B cell (primary cell): ENCODE measurements at regions of chr12 and their contacts with region 1.

Region 1: DNA sequence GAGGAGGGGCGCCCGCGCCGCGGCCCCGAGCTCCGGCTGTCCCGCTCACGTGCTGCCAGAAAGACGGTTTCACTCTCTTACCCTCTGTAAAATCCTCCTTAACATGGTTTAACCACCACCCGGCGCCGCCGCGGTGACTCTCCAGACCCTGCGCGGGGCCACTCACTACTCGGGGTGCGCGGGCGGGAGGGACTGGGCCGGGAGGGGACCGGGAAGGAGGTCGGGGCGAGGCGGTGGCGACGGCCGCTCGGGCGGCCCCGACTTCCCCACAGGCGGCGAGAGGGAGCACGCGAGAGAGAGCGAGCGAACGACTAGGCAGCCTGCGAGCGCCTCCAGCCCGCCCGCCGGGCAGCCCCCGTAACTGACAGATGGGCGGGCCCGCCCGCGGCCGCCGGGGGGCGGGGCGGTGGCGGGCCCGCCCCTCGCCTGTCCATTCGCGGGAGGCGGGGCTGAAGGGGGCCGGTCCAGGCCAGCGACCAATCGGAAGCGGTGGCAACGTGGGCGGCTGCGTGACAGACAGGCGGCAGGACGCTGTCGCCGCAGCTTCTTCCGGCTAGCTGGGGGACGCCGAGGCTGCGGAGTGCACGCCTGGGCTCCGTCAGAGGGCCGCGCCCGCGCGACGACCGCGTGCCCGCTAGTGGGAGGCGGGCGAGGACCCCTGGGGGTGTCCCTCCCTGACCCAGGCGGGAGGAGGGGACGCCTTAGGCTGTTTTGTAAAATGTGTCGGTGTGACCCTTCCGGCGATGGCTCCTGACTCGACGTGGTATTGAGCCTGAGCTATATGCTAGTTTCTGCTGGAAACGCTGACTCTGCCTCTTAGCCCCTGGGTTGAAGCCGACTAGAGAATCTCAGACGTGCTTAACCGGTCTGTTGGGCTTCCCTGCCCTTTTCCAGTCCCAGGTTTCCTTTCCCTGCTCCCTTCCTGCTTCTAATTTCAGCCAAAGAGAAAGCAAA is at the start of gene EEA1:
- DNase-seq: peak; percentile 97
- ATAC-seq: peak; percentile 82
- H3K4me3 ChIP-seq: peak within 1 kb of the TSS; percentile 64 to 91 (median 79)
- H3K4me3 Mint-ChIP-seq: peak within 1 kb of the TSS; percentile 96
- H3K27ac ChIP-seq: peak within 1 kb of the TSS; percentile 90 to 96
- H3K27ac Mint-ChIP-seq: peak within 1 kb of the TSS; percentile 96
- H3K4me1 ChIP-seq: peaks cover 23 to 24% of the 10 kb centered on the region in 2 donors
- H3K4me1 Mint-ChIP-seq: peaks cover 34% of the 10 kb centered on the region
- H3K27me3 ChIP-seq: no peaks in the 10 kb centered on the region
- H3K27me3 Mint-ChIP-seq: no peaks in the 10 kb centered on the region
- CTCF ChIP-seq: no peak
- total RNA-seq, gene EEA1: 24.4 and 26.3 TPM in 2 replicates

Region 2: DNA sequence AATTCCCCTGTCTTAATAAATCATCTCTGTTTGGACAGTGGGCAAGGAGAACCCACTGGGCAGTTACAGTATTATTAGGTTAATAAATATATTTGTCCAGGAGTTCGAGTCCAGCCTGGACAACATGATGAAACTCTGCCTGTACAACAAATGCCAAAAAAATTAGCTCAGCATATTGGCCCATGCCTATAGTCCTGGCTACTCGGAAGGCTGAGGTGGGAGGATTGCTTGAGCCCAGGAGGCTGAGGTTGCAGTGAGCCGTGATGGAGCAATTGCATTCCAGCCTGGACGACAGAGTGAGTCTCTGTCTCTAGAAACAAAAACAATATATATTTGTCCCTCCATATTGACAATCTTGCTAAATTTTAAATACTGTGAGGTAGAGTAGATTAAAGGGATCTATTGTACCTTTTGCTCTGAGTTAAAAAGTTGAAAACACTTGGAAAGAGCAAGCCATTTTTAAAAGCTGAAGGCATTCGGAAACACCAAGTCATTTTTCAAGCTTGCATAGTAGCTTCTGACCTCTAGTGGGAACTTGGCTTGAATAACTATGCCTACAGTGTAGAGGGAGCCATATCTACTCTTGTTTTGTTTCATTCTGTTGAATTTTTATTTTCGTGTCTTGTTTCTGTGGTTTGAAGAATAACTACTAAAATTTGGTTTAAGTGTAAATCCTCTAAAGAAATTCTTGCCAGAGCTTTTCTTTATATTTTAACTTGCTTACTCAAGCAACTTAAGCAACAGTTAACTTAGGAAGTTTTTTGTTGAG is 14.4 kb after region 1 on chr12:
- CTCF ChIA-PET with region 1: interaction called, 5 read pairs
- POLR2A ChIA-PET with region 1: interaction called, 3 read pairs
- intact Hi-C with region 1: loop called (anchors 1 kb)
- DNase-seq: no peak
- ATAC-seq: no peak
- H3K4me3 ChIP-seq: no peak overlapping the region
- H3K4me3 Mint-ChIP-seq: no peak overlapping the region
- H3K27ac ChIP-seq: peak overlapping the region in 1 of 2 donors; percentile 9
- H3K27ac Mint-ChIP-seq: peak overlapping the region; percentile 61
- H3K4me1 ChIP-seq: peaks cover 15 to 32% of the 10 kb centered on the region in 2 donors
- H3K4me1 Mint-ChIP-seq: peaks cover 31% of the 10 kb centered on the region
- H3K27me3 ChIP-seq: no peaks in the 10 kb centered on the region
- H3K27me3 Mint-ChIP-seq: no peaks in the 10 kb centered on the region
- CTCF ChIP-seq: no peak

Region 3: DNA sequence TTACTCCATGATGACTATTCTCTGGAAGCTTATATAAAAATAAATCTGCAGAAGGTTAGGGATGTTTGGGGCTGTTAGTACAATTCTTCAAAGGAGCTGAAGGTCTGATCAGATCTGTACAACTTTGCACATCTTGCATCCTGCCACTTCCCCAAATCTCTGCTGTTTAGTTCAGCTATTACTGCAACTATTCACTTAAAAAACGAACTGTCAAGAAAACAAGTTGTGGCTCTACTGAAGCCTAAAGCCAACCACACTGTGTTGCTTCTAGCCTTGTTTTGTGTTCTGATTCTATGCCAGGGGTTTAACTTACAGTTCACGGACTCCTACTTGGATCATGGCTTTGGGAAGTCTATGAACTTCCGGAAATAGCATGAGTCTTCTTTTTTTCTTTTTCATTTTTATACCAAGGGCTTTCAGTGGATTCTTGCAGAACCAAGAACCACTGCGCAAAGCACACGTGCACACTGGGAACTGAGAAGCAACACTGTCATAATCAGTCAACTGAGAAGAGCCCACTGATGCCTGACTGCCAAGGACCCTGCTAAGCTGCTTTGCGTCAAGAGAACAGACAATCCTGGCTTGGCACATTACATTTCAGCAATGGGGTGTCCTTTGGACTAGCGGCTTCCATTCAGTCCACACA is 66.1 kb after region 1 on chr12:
- CTCF ChIA-PET with region 1: interaction called, 4 read pairs
- POLR2A ChIA-PET with region 1: interaction called, 7 read pairs
- intact Hi-C with region 1: loop called (anchors 2 kb)
- DNase-seq: peak; percentile 79
- ATAC-seq: peak; percentile 94
- H3K4me3 ChIP-seq: peak overlapping the region in 1 of 5 experiments; percentile 6
- H3K4me3 Mint-ChIP-seq: peak overlapping the region; percentile 77
- H3K27ac ChIP-seq: peak overlapping the region; percentile 66 to 68
- H3K27ac Mint-ChIP-seq: peak overlapping the region; percentile 93
- H3K4me1 ChIP-seq: peaks cover 12 to 30% of the 10 kb centered on the region in 2 donors
- H3K4me1 Mint-ChIP-seq: peaks cover 27% of the 10 kb centered on the region
- H3K27me3 ChIP-seq: no peaks in the 10 kb centered on the region
- H3K27me3 Mint-ChIP-seq: no peaks in the 10 kb centered on the region
- CTCF ChIP-seq: no peak

Region 4: DNA sequence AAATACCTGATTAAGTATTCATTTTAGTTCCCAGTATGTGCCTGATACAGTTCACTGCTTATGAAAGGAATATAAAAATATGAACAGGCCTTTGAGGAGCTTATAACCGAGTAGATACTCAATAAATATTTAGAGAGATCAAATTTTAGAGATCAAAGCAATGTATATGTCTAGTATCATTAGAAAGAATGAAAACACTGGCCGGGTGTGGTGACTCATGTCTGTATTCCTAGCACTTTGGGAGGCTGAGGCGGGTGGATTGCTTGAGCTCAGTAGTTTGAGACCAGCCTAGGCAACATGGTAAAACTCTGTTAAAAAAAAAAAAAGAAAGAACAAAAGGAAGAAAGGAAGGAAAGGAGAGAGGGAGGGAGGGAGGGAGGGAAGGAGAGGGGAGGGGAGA is 113.0 kb after region 1 on chr12:
- CTCF ChIA-PET with region 1: no interaction called
- POLR2A ChIA-PET with region 1: no interaction called
- intact Hi-C with region 1: no loop called
- DNase-seq: no peak
- ATAC-seq: no peak
- H3K4me3 ChIP-seq: no peak overlapping the region
- H3K4me3 Mint-ChIP-seq: no peak overlapping the region
- H3K27ac ChIP-seq: no peak overlapping the region
- H3K27ac Mint-ChIP-seq: no peak overlapping the region
- H3K4me1 ChIP-seq: no peaks in the 10 kb centered on the region
- H3K4me1 Mint-ChIP-seq: no peaks in the 10 kb centered on the region
- H3K27me3 ChIP-seq: no peaks in the 10 kb centered on the region
- H3K27me3 Mint-ChIP-seq: no peaks in the 10 kb centered on the region
- CTCF ChIP-seq: no peak

Region 5: GRCh38 chr12:93183940-93184671 is 254.9 kb after region 1 on chr12:
- CTCF ChIA-PET with region 1: no interaction called
- POLR2A ChIA-PET with region 1: no interaction called
- intact Hi-C with region 1: no loop called
- DNase-seq: peak; percentile 74
- ATAC-seq: peak; percentile 85
- H3K4me3 ChIP-seq: peak overlapping the region in 1 of 5 experiments; percentile 18
- H3K4me3 Mint-ChIP-seq: peak overlapping the region; percentile 64
- H3K27ac ChIP-seq: peak overlapping the region; percentile 45 to 75
- H3K27ac Mint-ChIP-seq: peak overlapping the region; percentile 93
- H3K4me1 ChIP-seq: peaks cover 32 to 44% of the 10 kb centered on the region in 2 donors
- H3K4me1 Mint-ChIP-seq: peaks cover 51% of the 10 kb centered on the region
- H3K27me3 ChIP-seq: no peaks in the 10 kb centered on the region
- H3K27me3 Mint-ChIP-seq: no peaks in the 10 kb centered on the region
- CTCF ChIP-seq: no peak

Region 6: DNA sequence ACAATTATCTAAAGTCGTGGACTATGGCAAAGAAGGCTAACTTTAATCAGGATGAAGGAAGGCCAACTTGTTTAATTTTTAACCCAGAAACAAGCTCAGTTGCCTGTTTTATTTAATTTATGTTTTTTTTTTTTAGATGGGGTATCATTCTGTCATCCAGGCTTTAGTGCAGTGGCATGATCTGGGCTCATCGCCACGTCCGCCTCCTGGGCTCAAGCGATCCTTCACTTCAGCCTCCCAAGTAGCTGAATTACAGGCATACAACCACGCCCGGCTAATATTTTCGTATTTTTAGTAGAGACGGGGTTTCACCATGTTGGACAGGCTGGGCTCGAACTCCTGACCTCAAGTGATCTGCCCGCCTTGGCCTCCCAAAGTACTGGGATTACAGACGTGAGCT is 468.2 kb after region 1 on chr12:
- CTCF ChIA-PET with region 1: interaction called, 16 read pairs
- POLR2A ChIA-PET with region 1: no interaction called
- intact Hi-C with region 1: loop called (anchors 5 kb)
- DNase-seq: no peak
- ATAC-seq: no peak
- H3K4me3 ChIP-seq: no peak overlapping the region
- H3K4me3 Mint-ChIP-seq: no peak overlapping the region
- H3K27ac ChIP-seq: no peak overlapping the region
- H3K27ac Mint-ChIP-seq: no peak overlapping the region
- H3K4me1 ChIP-seq: no peaks in the 10 kb centered on the region
- H3K4me1 Mint-ChIP-seq: peaks cover 9% of the 10 kb centered on the region
- H3K27me3 ChIP-seq: no peaks in the 10 kb centered on the region
- H3K27me3 Mint-ChIP-seq: no peaks in the 10 kb centered on the region
- CTCF ChIP-seq: no peak

Region 7: DNA sequence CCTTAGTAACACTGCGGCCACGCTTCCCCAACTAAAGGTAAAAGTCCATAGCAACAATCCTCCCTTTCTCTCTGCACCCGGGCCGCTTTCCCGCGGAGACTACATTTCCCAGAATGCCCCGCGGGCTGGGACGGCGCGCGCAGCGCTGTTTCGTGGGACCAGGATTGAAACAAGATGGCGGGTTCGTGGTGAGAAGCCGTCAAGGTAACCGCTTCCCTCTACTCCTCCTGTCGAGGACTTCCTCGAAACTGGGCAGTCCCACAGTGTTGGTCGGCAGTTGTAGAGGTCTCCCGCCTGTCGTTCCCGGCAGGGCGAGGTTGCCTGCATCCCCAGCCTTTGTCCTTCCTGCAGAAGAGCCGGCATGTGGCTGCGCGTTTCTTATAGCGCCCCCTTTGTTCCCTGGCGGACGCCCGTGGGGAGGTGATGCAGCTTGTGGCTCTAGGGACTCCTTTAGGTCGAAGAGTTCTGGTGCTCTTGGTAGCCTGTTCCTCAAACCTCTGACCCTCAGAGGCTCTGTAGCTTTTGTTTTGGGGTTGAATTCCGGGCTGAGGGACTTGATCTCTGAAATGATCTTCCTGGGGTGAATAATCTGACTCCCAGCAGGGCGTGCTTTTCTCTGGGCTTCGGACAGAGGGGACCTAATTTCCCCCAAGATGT is 538.2 kb after region 1 on chr12 and contains the start of gene MRPL42:
- CTCF ChIA-PET with region 1: interaction called, 3 read pairs
- POLR2A ChIA-PET with region 1: interaction called, 3 read pairs
- intact Hi-C with region 1: loop called (anchors 1 kb)
- DNase-seq: peak; percentile 95
- ATAC-seq: peak; percentile 93
- H3K4me3 ChIP-seq: peak within 1 kb of the TSS; percentile 64 to 82 (median 78)
- H3K4me3 Mint-ChIP-seq: peak within 1 kb of the TSS; percentile 95
- H3K27ac ChIP-seq: peak within 1 kb of the TSS; percentile 60 to 80
- H3K27ac Mint-ChIP-seq: peak within 1 kb of the TSS; percentile 95
- H3K4me1 ChIP-seq: peaks cover 12 to 17% of the 10 kb centered on the region in 2 donors
- H3K4me1 Mint-ChIP-seq: peaks cover 28% of the 10 kb centered on the region
- H3K27me3 ChIP-seq: no peaks in the 10 kb centered on the region
- H3K27me3 Mint-ChIP-seq: no peaks in the 10 kb centered on the region
- CTCF ChIP-seq: peak; percentile 83
- total RNA-seq, gene MRPL42: 41.9 and 45.2 TPM in 2 replicates

Region 8: GRCh38 chr12:93677195-93678064 is 748.2 kb after region 1 on chr12 and contains the start of gene CRADD:
- CTCF ChIA-PET with region 1: no interaction called
- POLR2A ChIA-PET with region 1: no interaction called
- intact Hi-C with region 1: loop called (anchors 1 kb)
- DNase-seq: peak; percentile 98
- ATAC-seq: peak; percentile 91
- H3K4me3 ChIP-seq: peak within 1 kb of the TSS; percentile 50 to 90 (median 86)
- H3K4me3 Mint-ChIP-seq: peak within 1 kb of the TSS; percentile 95
- H3K27ac ChIP-seq: peak within 1 kb of the TSS; percentile 95 to 99
- H3K27ac Mint-ChIP-seq: peak within 1 kb of the TSS; percentile 99
- H3K4me1 ChIP-seq: peaks cover 14 to 18% of the 10 kb centered on the region in 2 donors
- H3K4me1 Mint-ChIP-seq: peaks cover 31% of the 10 kb centered on the region
- H3K27me3 ChIP-seq: peaks cover 0 to 5% (median 0%) of the 10 kb centered on the region in 4 experiments
- H3K27me3 Mint-ChIP-seq: peaks cover 15% of the 10 kb centered on the region
- CTCF ChIP-seq: no peak
- total RNA-seq, gene CRADD: 15.1 and 15.6 TPM in 2 replicates